SK-N-SH (cell line): ENCODE measurements at regions of chr19 and their contacts with region 1.

Region 1: GRCh38 chr19:18588611-18589379 is at the start of gene REX1BD:
- DNase-seq: peak; percentile 89
- H3K4me3 ChIP-seq: peak within 1 kb of the TSS; percentile 83 to 89
- H3K27ac ChIP-seq: peak within 1 kb of the TSS; percentile 69 to 94
- H3K4me1 ChIP-seq: peaks cover 6 to 22% of the 10 kb centered on the region in 2 experiments; a peak in 1 of 4 replicates
- H3K27me3 ChIP-seq: no peaks in the 10 kb centered on the region
- CTCF ChIP-seq: peak; percentile 86
- EP300 ChIP-seq: no peak
- RAD21 ChIP-seq: peak; percentile 5; the same call in 1 of the 2 replicates
- polyA plus RNA-seq, gene REX1BD: 109 and 159 TPM in 2 replicates

Region 2: GRCh38 chr19:18450931-18451845 is 137.6 kb before region 1 on chr19:
- CTCF ChIA-PET with region 1: interaction called, 31 read pairs
- POLR2A ChIA-PET with region 1: no interaction called
- DNase-seq: peak; percentile 95
- H3K4me3 ChIP-seq: peak overlapping the region in 1 of 2 experiments; percentile 50; a peak in 1 of 4 replicates
- H3K27ac ChIP-seq: no peak overlapping the region
- H3K4me1 ChIP-seq: peaks cover 2 to 4% of the 10 kb centered on the region in 2 experiments; a peak in 1 of 4 replicates
- H3K27me3 ChIP-seq: no peaks in the 10 kb centered on the region
- CTCF ChIP-seq: peak; percentile 95
- EP300 ChIP-seq: no peak
- RAD21 ChIP-seq: peak; percentile 89

Region 3: DNA sequence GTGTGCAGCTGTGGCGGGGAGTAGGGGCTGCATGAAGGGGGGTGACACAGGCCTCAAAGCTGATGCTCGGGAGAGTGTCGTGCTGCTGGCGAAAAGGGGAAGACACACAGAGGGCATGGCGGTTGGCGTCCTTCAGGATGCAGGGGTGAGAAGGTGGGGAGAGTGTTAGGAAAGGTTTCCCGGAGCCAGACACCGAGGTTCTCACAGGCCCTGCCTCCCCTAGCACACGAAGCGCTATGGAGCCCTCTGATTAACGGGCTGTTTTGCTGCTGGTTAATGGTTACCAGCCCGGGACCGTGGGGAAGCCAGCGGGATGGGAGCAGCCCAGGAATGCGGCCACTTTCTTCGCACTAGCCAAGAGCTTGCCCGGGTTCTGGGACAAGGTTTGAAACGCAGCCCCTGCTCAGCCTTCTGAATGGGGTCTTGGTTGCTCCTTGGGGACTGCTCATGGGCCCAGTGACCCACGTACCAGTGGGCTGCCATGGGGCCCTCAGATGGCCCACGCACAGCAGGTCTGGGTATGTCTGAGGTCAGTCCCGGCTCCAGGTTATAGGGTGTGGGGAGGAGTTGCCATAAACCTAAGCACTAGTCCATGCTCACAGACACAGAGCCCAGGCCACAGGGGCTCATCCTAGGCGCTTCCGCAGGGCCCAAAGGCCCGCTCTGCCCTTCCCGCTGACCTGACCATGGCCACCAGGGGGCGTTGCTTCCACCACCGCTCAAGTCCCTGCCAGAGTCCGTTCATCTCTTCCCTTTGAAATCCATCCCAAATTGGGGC is 119.5 kb before region 1 on chr19:
- CTCF ChIA-PET with region 1: interaction called, 30 read pairs
- POLR2A ChIA-PET with region 1: no interaction called
- DNase-seq: peak; percentile 82
- H3K4me3 ChIP-seq: no peak overlapping the region; a peak in 1 of 4 replicates
- H3K27ac ChIP-seq: no peak overlapping the region
- H3K4me1 ChIP-seq: peaks cover 0 to 5% of the 10 kb centered on the region in 2 experiments; a peak in 1 of 4 replicates
- H3K27me3 ChIP-seq: no peaks in the 10 kb centered on the region
- CTCF ChIP-seq: peak; percentile 84
- EP300 ChIP-seq: no peak
- RAD21 ChIP-seq: peak; percentile 59

Region 4: DNA sequence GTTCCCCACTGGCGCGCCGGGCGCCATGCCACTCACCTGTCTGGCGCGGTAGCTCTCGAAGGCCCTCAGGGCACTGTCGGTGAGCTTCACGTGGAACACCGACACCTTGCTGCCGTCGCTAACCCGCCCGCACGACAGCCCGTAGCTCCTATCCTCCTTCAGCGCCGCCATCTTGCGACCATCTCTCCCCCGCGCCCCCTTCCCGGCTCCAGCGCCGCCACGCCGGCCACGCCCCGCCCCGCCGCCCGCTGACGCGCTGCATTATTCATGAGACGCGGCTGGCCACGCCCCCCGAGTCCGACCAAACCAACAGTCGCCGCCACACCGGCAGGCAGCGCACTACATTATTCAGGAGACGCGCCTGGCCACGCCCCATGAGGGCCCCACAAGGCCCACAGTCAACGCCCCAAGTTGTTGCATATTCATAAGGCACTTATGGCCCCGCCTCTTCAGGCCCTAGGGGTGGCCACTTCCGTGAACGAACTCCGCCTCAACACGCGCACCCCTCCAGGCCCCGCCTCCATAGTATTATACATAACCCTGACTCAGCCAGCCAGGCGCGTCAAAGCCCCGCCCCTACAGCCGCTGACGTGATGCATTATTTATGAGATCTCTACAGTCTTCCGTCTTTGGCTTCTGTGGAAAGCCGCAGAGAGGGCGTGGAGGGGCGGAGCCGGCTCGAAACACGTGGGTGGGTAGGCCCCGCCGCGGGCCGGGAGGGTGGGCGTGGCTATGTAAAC is 66.7 kb before region 1 on chr19 and contains the start of gene ELL:
- CTCF ChIA-PET with region 1: interaction called, 28 read pairs
- POLR2A ChIA-PET with region 1: no interaction called
- DNase-seq: peak; percentile 96
- H3K4me3 ChIP-seq: peak within 1 kb of the TSS; percentile 73 to 97
- H3K27ac ChIP-seq: peak within 1 kb of the TSS; percentile 72 to 95
- H3K4me1 ChIP-seq: peaks cover 4 to 11% of the 10 kb centered on the region in 2 experiments; a peak in 1 of 4 replicates
- H3K27me3 ChIP-seq: no peaks in the 10 kb centered on the region
- CTCF ChIP-seq: no peak
- EP300 ChIP-seq: no peak
- RAD21 ChIP-seq: no peak
- polyA plus RNA-seq, gene ELL: 3.6 and 7.4 TPM in 2 replicates

Region 5: GRCh38 chr19:18577365-18577914 is 11.4 kb before region 1 on chr19:
- CTCF ChIA-PET with region 1: interaction called, 45 read pairs
- POLR2A ChIA-PET with region 1: interaction called, 20 read pairs
- DNase-seq: no peak
- H3K4me3 ChIP-seq: no peak overlapping the region
- H3K27ac ChIP-seq: no peak overlapping the region
- H3K4me1 ChIP-seq: peaks cover 10 to 12% of the 10 kb centered on the region in 2 experiments; a peak in 3 of 4 replicates
- H3K27me3 ChIP-seq: no peaks in the 10 kb centered on the region
- CTCF ChIP-seq: no peak
- EP300 ChIP-seq: no peak
- RAD21 ChIP-seq: no peak

Region 6: DNA sequence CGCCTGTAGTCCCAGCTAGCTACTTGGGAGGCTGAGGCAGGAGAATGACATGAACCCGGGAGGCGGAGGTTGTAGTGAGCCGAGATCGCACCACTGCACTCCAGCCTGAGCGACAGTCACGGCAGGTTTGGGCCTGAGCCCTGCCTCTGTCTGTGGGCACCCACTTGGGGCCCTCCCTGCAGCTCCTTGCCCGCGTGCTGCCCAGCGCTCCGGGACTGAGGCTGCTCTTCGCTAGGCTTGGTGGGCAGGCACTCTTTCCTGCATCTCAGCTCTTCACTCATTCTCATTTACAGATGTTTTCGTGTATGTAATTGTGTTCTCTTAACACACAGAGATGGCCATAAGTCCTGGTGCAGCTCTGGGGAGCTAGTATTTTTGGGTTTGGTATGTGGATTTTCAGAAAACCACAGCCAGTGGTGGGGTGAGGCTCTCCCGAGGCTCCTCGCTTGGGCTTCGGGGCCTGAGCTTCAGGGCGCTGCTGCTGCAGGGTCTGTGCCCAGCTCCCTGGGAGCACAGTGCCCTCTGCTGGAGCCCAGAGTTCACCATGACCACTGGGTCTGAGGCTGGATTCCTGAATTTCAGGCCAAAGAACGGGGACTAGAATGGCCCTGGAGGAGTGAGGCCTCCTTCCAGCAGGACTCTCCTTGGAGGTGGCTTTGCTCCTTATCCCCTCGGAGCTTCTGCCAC is 258.2 kb after region 1 on chr19:
- CTCF ChIA-PET with region 1: interaction called, 234 read pairs
- POLR2A ChIA-PET with region 1: interaction called, 14 read pairs
- DNase-seq: peak; percentile 88
- H3K4me3 ChIP-seq: peak overlapping the region in 1 of 2 experiments; percentile 10; a peak in 2 of 4 replicates
- H3K27ac ChIP-seq: peak overlapping the region; percentile 63 to 98; a peak in 3 of 4 replicates
- H3K4me1 ChIP-seq: peaks cover 24 to 82% of the 10 kb centered on the region in 2 experiments
- H3K27me3 ChIP-seq: no peaks in the 10 kb centered on the region
- CTCF ChIP-seq: peak; percentile 94
- EP300 ChIP-seq: no peak
- RAD21 ChIP-seq: peak; percentile 88

Region 7: DNA sequence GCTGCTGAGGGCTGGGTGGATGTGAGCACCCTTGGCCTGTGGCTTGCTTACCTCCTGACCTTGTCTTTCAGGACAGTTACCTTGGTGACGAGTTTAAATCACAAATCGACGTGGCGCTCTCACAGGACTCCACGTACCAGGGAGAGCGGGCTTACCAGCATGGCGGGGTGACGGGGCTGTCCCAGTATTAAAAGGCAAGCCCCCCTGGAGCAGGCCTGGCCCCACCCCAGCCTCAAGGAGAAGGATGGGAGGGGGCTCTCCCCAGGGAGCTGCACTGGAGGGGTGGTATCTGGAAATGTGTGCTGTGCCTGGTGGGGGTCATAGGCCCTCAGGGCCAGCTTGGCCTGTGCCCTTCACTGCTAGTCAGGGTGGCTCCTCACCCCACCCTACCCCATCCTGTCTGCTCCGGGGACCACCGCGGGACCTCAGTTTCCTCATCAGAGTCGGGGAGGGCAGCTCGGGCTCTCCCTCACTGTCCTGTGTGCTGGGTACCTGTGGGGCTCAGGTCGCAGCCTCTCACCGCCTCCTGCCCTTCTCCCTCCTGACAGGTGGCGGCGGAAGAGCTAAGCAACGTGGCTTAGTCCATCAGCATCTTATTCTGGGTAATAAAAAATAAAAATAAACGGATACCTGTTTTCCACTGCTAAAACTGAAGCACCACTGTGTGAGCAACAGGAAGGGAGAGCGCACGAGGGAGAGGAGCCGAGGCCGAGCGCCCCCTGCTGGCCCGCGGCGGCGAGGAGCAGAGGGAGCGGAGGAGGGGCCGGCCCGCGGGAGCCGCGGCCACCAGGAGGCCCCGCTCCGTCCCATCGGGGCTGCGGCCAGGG is 277.4 kb after region 1 on chr19:
- CTCF ChIA-PET with region 1: interaction called, 52 read pairs
- POLR2A ChIA-PET with region 1: interaction called, 3 read pairs
- DNase-seq: peak; percentile 98
- H3K4me3 ChIP-seq: peak overlapping the region in 1 of 2 experiments; percentile 53; a peak in 1 of 4 replicates
- H3K27ac ChIP-seq: no peak overlapping the region
- H3K4me1 ChIP-seq: no peaks in the 10 kb centered on the region
- H3K27me3 ChIP-seq: no peaks in the 10 kb centered on the region
- CTCF ChIP-seq: peak; percentile 99
- EP300 ChIP-seq: no peak
- RAD21 ChIP-seq: peak; percentile 74